K562 (cell line): ENCODE measurements at regions of chr17 and their contacts with region 1.

Region 1: GRCh38 chr17:44219108-44219615 is 313 bp downstream of the UBTF start:
- DNase-seq: peak in 3 of 4 experiments; percentile 74 to 79 (median 76)
- ATAC-seq: peak; percentile 53
- H3K4me3 ChIP-seq: peak overlapping the region; percentile 83
- H3K27ac ChIP-seq: peak overlapping the region; percentile 98
- H3K4me1 ChIP-seq: peaks cover 16 to 32% of the 10 kb centered on the region in 2 experiments
- H3K27me3 ChIP-seq: no peaks in the 10 kb centered on the region
- CTCF ChIP-seq: peak; percentile 33 to 69 (median 54); a peak in 5 of 6 replicates
- EP300 ChIP-seq: no peak
- POLR2A ChIP-seq: peak; percentile 64
- RAD21 ChIP-seq: 0 out of 4 replicates have a peak, but pooled peaks of 1 of the 2 experiments have one; percentile 11

Region 2: DNA sequence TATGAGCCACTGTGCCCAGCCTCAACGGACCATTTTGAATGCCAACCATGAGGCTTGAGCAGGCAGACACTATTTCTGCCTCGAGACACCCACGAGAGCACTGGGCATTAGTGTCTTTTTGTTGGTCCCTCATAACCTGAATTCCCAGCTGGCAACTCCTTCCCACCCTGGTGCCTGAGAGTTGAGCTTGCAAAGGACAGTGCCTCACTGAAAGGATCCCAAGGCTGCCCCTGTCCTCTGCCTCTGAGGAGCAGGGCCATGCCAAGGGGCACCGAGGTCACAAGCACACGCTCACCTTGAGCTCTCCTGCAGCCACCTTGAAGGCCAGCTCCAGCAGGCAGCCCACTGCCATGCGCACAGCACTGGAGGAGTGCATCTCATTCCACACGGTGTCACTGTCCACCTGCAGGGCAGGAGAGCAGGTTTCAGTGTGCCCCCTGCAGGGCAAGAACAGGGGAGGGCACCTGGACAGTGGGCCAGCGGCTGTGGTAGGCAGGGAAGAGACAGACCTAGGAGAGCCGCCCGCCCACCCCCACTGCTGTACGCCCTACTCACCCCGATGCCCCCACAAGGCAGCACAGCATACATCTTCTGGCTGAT is 135.8 kb before region 1 on chr17:
- CTCF ChIA-PET with region 1: no interaction called
- POLR2A ChIA-PET with region 1: no interaction called
- in situ Hi-C with region 1: no loop called
- intact Hi-C with region 1: no loop called
- DNase-seq: peak in 2 of 4 experiments; percentile 44 to 61
- ATAC-seq: peak; percentile 60
- H3K4me3 ChIP-seq: no peak overlapping the region
- H3K27ac ChIP-seq: no peak overlapping the region
- H3K4me1 ChIP-seq: peaks cover 21 to 53% of the 10 kb centered on the region in 2 experiments
- H3K27me3 ChIP-seq: no peaks in the 10 kb centered on the region
- CTCF ChIP-seq: peak; percentile 52 to 99 (median 93)
- EP300 ChIP-seq: no peak
- POLR2A ChIP-seq: no peak
- RAD21 ChIP-seq: peak in 1 of 2 experiments; percentile 68; a peak in 2 of 4 replicates

Region 3: DNA sequence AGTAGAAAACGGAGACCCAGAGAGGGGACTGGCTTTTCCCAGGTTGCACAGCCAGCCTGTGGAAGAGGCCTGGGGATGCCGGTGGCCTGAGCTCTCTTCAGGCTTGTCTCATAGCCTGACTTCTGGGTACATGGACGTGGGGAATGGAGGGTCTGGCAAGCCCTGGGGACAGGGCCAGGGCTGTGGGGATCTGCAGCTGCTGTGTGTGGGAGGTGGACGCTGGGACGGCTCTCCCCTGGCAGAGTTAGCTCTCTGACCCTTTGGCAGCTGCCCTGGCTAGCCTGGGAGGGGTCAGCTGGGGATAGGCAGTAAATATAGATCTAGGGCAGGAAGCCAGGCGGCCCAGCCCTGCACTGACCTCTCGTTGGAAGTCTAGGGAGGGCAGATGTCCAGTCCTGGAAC is 28.3 kb after region 1 on chr17:
- CTCF ChIA-PET with region 1: no interaction called
- POLR2A ChIA-PET with region 1: interaction called, 6 read pairs
- in situ Hi-C with region 1: no loop called
- intact Hi-C with region 1: loop called (anchors 2 kb)
- DNase-seq: no peak
- ATAC-seq: no peak; the same call in 1 of the 3 replicates
- H3K4me3 ChIP-seq: no peak overlapping the region
- H3K27ac ChIP-seq: no peak overlapping the region
- H3K4me1 ChIP-seq: peaks cover 25 to 38% of the 10 kb centered on the region in 2 experiments; a peak in 4 of 5 replicates
- H3K27me3 ChIP-seq: peaks cover 0 to 2% of the 10 kb centered on the region in 2 experiments; a peak in 1 of 5 replicates
- CTCF ChIP-seq: no peak
- EP300 ChIP-seq: no peak
- POLR2A ChIP-seq: no peak
- RAD21 ChIP-seq: no peak